Endothelial cell of umbilical vein (primary cell): ENCODE measurements at regions of chr6 and their contacts with region 1.

Region 1: GRCh38 chr6:126170978-126171382 is 168.9 kb upstream of the CENPW start:
- DNase-seq: peak; percentile 48
- H3K4me3 ChIP-seq: no peak overlapping the region
- H3K27ac ChIP-seq: no peak overlapping the region
- H3K4me1 ChIP-seq: no peaks in the 10 kb centered on the region
- H3K27me3 ChIP-seq: no peaks in the 10 kb centered on the region
- CTCF ChIP-seq: peak; percentile 32 to 39
- POLR2A ChIP-seq: no peak

Region 2: GRCh38 chr6:125779924-125780539 is 390.9 kb before region 1 on chr6:
- CTCF ChIA-PET with region 1: no interaction called
- POLR2A ChIA-PET with region 1: no interaction called
- dilution Hi-C with region 1: no loop called
- intact Hi-C with region 1: loop called (anchors 10 kb)
- DNase-seq: peak; percentile 96
- H3K4me3 ChIP-seq: peak overlapping the region; percentile 62 to 95 (median 84)
- H3K27ac ChIP-seq: peak overlapping the region; percentile 94
- H3K4me1 ChIP-seq: peaks cover 8% of the 10 kb centered on the region
- H3K27me3 ChIP-seq: peaks cover 8 to 10% of the 10 kb centered on the region in 2 experiments
- CTCF ChIP-seq: peak in 1 of 2 donors; percentile 5
- POLR2A ChIP-seq: no peak

Region 3: GRCh38 chr6:125944434-125944816 is 226.6 kb before region 1 on chr6:
- CTCF ChIA-PET with region 1: no interaction called
- POLR2A ChIA-PET with region 1: no interaction called
- dilution Hi-C with region 1: no loop called
- intact Hi-C with region 1: no loop called
- DNase-seq: peak; percentile 98
- H3K4me3 ChIP-seq: no peak overlapping the region
- H3K27ac ChIP-seq: peak overlapping the region; percentile 89
- H3K4me1 ChIP-seq: peaks cover 40% of the 10 kb centered on the region
- H3K27me3 ChIP-seq: no peaks in the 10 kb centered on the region
- CTCF ChIP-seq: no peak
- POLR2A ChIP-seq: no peak

Region 4: GRCh38 chr6:125995972-125996580 is 174.9 kb before region 1 on chr6:
- CTCF ChIA-PET with region 1: interaction called, 10 read pairs
- POLR2A ChIA-PET with region 1: no interaction called
- dilution Hi-C with region 1: no loop called
- intact Hi-C with region 1: loop called (anchors 1 kb)
- DNase-seq: peak; percentile 74
- H3K4me3 ChIP-seq: no peak overlapping the region
- H3K27ac ChIP-seq: no peak overlapping the region
- H3K4me1 ChIP-seq: no peaks in the 10 kb centered on the region
- H3K27me3 ChIP-seq: no peaks in the 10 kb centered on the region
- CTCF ChIP-seq: peak; percentile 84 to 97
- POLR2A ChIP-seq: no peak

Region 5: DNA sequence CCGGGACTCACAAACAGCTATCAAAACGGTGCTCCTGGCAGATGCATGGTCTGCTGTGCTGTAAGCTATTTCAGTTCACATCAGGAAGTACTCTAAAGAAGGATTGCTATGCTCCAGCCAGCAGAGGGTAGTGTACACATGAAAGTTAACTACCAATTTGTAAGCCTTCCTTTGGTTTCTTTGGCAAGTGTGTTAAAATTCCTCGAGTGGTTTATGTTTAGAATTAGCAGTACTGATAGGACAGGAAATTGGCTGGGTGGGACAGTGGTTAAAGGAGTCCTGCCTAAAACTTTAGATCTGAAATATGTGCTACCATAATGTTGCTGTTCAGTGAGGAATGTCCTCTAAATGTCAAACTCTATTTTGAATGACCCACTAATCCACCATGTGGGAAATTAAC is 137.3 kb before region 1 on chr6:
- CTCF ChIA-PET with region 1: interaction called, 34 read pairs
- POLR2A ChIA-PET with region 1: no interaction called
- dilution Hi-C with region 1: no loop called
- intact Hi-C with region 1: loop called (anchors 1 kb)
- DNase-seq: peak; percentile 78
- H3K4me3 ChIP-seq: no peak overlapping the region
- H3K27ac ChIP-seq: no peak overlapping the region
- H3K4me1 ChIP-seq: no peaks in the 10 kb centered on the region
- H3K27me3 ChIP-seq: no peaks in the 10 kb centered on the region
- CTCF ChIP-seq: peak; percentile 56 to 65
- POLR2A ChIP-seq: no peak

Region 6: GRCh38 chr6:126312013-126312663 is 141.2 kb after region 1 on chr6:
- CTCF ChIA-PET with region 1: interaction called, 12 read pairs
- POLR2A ChIA-PET with region 1: no interaction called
- dilution Hi-C with region 1: no loop called
- intact Hi-C with region 1: loop called (anchors 1 kb)
- DNase-seq: peak; percentile 27
- H3K4me3 ChIP-seq: no peak overlapping the region
- H3K27ac ChIP-seq: no peak overlapping the region
- H3K4me1 ChIP-seq: no peaks in the 10 kb centered on the region
- H3K27me3 ChIP-seq: no peaks in the 10 kb centered on the region
- CTCF ChIP-seq: peak; percentile 23 to 26
- POLR2A ChIP-seq: no peak

Region 7: DNA sequence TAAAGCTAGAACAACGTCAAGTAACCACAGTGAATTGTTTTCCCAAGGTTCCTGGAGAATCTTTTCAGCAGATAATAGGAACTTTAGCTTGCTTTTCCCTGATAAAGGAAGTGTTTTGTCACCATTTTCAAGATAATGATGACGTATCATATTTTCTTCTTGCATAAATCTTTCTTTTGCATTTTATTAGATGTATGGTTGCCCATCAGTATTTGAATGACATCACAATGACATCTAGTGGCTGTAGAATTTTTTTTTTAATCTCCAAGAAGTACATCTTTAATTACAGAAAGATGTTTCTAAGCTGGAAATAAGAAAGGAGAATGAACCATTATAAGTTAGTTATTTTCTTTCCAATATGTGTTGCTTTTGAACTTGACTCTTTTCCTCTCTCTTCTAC is 251.9 kb after region 1 on chr6:
- CTCF ChIA-PET with region 1: no interaction called
- POLR2A ChIA-PET with region 1: no interaction called
- dilution Hi-C with region 1: no loop called
- intact Hi-C with region 1: loop called (anchors 10 kb)
- DNase-seq: no peak
- H3K4me3 ChIP-seq: no peak overlapping the region
- H3K27ac ChIP-seq: no peak overlapping the region
- H3K4me1 ChIP-seq: no peaks in the 10 kb centered on the region
- H3K27me3 ChIP-seq: no peaks in the 10 kb centered on the region
- CTCF ChIP-seq: no peak
- POLR2A ChIP-seq: no peak